Activated B cell treated with CpG ODN at 0.5 μM for 24 hours (primary cell): ENCODE measurements at regions of chr21 and their contacts with region 1.

Region 1: GRCh38 chr21:43810505-43811261 is 21.3 kb downstream of the RRP1 start:
- DNase-seq: peak; percentile 88
- ATAC-seq: peak; percentile 97
- H3K4me3 Mint-ChIP-seq: no peak overlapping the region
- H3K27ac Mint-ChIP-seq: no peak overlapping the region
- H3K4me1 Mint-ChIP-seq: peaks cover 28% of the 10 kb centered on the region
- H3K27me3 Mint-ChIP-seq: peaks cover 7% of the 10 kb centered on the region
- CTCF ChIP-seq: peak; percentile 68

Region 2: GRCh38 chr21:43797925-43798715 is 12.6 kb before region 1 on chr21:
- CTCF ChIA-PET with region 1: no interaction called
- POLR2A ChIA-PET with region 1: no interaction called
- intact Hi-C with region 1: no loop called
- DNase-seq: no peak
- ATAC-seq: no peak
- H3K4me3 Mint-ChIP-seq: no peak overlapping the region
- H3K27ac Mint-ChIP-seq: peak overlapping the region; percentile 7
- H3K4me1 Mint-ChIP-seq: peaks cover under 1% of the 10 kb centered on the region
- H3K27me3 Mint-ChIP-seq: no peaks in the 10 kb centered on the region
- CTCF ChIP-seq: no peak

Region 3: GRCh38 chr21:43902441-43902840 is 91.8 kb after region 1 on chr21:
- CTCF ChIA-PET with region 1: no interaction called
- POLR2A ChIA-PET with region 1: no interaction called
- intact Hi-C with region 1: no loop called
- DNase-seq: no peak
- ATAC-seq: no peak
- H3K4me3 Mint-ChIP-seq: no peak overlapping the region
- H3K27ac Mint-ChIP-seq: no peak overlapping the region
- H3K4me1 Mint-ChIP-seq: no peaks in the 10 kb centered on the region
- H3K27me3 Mint-ChIP-seq: no peaks in the 10 kb centered on the region
- CTCF ChIP-seq: no peak

Region 4: GRCh38 chr21:43975495-43975993 is 164.9 kb after region 1 on chr21:
- CTCF ChIA-PET with region 1: interaction called, 34 read pairs
- POLR2A ChIA-PET with region 1: no interaction called
- intact Hi-C with region 1: loop called (anchors 1 kb)
- DNase-seq: peak; percentile 76
- ATAC-seq: peak; percentile 98
- H3K4me3 Mint-ChIP-seq: no peak overlapping the region
- H3K27ac Mint-ChIP-seq: no peak overlapping the region
- H3K4me1 Mint-ChIP-seq: peaks cover 9% of the 10 kb centered on the region
- H3K27me3 Mint-ChIP-seq: no peaks in the 10 kb centered on the region
- CTCF ChIP-seq: peak; percentile 54

Region 5: GRCh38 chr21:44510508-44511210 is 700.0 kb after region 1 on chr21:
- CTCF ChIA-PET with region 1: no interaction called
- POLR2A ChIA-PET with region 1: no interaction called
- intact Hi-C with region 1: no loop called
- DNase-seq: peak; percentile 66
- ATAC-seq: peak; percentile 72
- H3K4me3 Mint-ChIP-seq: no peak overlapping the region
- H3K27ac Mint-ChIP-seq: no peak overlapping the region
- H3K4me1 Mint-ChIP-seq: peaks cover 2% of the 10 kb centered on the region
- H3K27me3 Mint-ChIP-seq: peaks cover 10% of the 10 kb centered on the region
- CTCF ChIP-seq: no peak